AG04449 (cell line): ENCODE measurements at regions of chr19 and their contacts with region 1.

Region 1: GRCh38 chr19:49073514-49074378 is 1.2 kb upstream of the KCNA7 start:
- DNase-seq: no peak
- H3K4me3 ChIP-seq: no peak overlapping the region
- CTCF ChIP-seq: peak; percentile 34

Region 2: DNA sequence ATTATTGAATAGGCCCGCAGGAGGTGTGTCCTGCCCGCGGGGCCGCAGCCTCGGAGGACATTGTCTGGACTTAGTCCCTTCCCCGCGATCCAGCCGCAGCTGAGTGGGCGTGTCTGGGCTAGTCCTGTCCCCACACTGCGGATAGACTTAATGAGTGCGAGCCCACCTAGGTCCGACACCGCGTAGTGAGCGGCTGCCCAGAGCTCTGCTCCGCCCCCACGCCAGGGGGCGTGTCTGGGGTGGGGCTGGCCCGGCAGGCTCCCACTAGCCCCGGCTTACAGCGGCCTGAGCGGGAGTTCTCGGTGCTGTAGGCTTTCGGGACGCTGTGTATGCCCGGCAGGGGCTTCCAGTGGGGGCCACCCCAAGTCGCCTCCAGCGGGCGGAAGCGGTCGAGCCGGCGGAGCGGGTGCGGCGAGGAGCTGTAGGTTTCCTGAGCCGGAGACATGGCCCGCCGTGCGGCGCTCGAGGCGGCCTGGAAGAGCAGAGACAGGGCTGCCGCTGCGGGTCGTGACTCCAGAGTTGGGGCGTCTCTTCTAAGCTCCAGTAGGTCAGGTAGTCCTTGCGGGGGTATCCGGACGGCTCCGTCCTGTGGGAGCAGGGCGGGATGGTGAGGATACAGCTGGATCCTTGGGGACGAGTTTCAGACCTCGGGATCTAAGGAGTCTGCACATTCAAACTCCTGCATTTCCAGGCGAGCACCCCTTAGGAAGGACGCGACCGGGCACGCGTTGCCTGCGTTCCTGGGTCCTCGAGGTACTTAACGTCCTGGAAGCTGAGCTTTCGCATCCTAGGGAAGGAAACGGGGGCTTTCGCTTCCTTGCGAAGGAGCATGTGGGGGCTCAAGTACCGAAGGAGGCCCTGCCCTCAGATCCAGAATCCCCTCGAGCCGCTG is 17.5 kb before region 1 on chr19:
- CTCF ChIA-PET with region 1: interaction called, 17 read pairs
- POLR2A ChIA-PET with region 1: no interaction called
- DNase-seq: no peak
- H3K4me3 ChIP-seq: peak overlapping the region; percentile 66
- CTCF ChIP-seq: peak; percentile 46

Region 3: GRCh38 chr19:49210108-49210900 is 136.6 kb after region 1 on chr19:
- CTCF ChIA-PET with region 1: interaction called, 13 read pairs
- POLR2A ChIA-PET with region 1: no interaction called
- DNase-seq: no peak
- H3K4me3 ChIP-seq: no peak overlapping the region
- CTCF ChIP-seq: no peak